ENCODE measurements at regions of chr4 and their contacts with region 1.

Region 1: GRCh38 chr4:41375561-41375960 is 118.8 kb downstream of the UCHL1 start:
- DNase-seq: no peak
- H3K4me3 ChIP-seq: no peak overlapping the region
- CTCF ChIP-seq: no peak
- POLR2A ChIP-seq: no peak

Region 2: GRCh38 chr4:41873380-41874295 is 498.1 kb after region 1 on chr4:
- intact Hi-C with region 1: loop called (anchors 5 kb)
- DNase-seq: no peak
- H3K4me3 ChIP-seq: no peak overlapping the region
- CTCF ChIP-seq: no peak
- POLR2A ChIP-seq: no peak